HCT116 (cell line): ENCODE measurements at regions of chr3 and their contacts with region 1.

Region 1: GRCh38 chr3:157130467-157131251 is 29.3 kb downstream of the CCNL1 start:
- DNase-seq: peak; percentile 80
- ATAC-seq: peak; percentile 72
- H3K4me3 ChIP-seq: peak overlapping the region; percentile 25 to 36
- H3K27ac ChIP-seq: peak overlapping the region; percentile 99
- H3K4me1 ChIP-seq: peaks cover 54 to 87% of the 10 kb centered on the region in 2 experiments
- H3K27me3 ChIP-seq: no peaks in the 10 kb centered on the region
- CTCF ChIP-seq: peak in 2 of 3 experiments; percentile 65 to 74; a peak in 4 of 6 replicates
- POLR2A ChIP-seq: no peak
- RAD21 ChIP-seq: no peak

Region 2: DNA sequence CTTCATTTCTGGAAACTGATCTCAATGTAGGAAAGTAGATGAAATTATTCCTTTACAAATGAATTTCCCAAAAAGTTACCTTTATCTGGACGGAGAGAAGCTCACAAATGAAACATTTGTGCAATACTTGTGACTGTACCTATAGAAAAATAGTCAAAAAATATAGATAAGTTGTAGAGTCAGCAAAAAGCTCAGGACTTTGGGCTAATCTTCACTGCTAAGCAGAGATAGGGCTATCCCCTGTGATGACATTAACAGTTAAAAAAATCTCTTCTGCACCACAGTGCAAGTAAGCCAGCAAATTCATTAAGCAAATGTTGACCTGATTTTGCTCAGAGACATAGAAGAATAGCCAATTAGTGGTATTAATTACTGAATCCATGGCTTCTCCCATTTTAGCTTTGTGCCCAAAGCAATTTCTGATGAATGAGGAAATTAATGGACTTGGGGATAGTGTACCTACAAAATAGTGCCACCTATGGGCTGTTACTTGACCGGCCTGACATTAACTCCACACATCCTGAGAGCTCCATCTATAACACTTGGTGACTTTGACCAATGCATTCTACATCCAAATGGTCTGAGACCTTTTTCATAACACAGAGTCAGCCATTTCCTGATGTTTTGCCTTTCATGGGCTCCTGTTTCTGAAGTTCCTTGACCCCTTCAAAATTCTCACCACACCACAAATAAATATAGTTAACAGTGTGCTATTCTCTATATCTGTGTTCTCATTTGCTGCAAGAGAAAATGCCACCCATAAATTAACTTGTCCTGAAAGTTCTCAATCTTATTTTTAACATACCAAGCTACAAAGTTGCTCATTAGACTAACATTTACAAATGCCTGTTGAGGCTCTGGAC is 680.7 kb before region 1 on chr3:
- CTCF ChIA-PET with region 1: interaction called, 4 read pairs
- POLR2A ChIA-PET with region 1: no interaction called
- RAD21 ChIA-PET with region 1: no interaction called
- intact Hi-C with region 1: loop called (anchors 10 kb)
- DNase-seq: peak; percentile 37
- ATAC-seq: peak; percentile 91
- H3K4me3 ChIP-seq: no peak overlapping the region
- H3K27ac ChIP-seq: no peak overlapping the region
- H3K4me1 ChIP-seq: no peaks in the 10 kb centered on the region
- H3K27me3 ChIP-seq: no peaks in the 10 kb centered on the region
- CTCF ChIP-seq: peak; percentile 47 to 74 (median 68); a peak in 5 of 6 replicates
- POLR2A ChIP-seq: no peak
- RAD21 ChIP-seq: peak; percentile 61

Region 3: GRCh38 chr3:156816800-156817645 is 313.6 kb before region 1 on chr3:
- CTCF ChIA-PET with region 1: no interaction called
- POLR2A ChIA-PET with region 1: interaction called, 3 read pairs
- RAD21 ChIA-PET with region 1: no interaction called
- intact Hi-C with region 1: loop called (anchors 2 kb)
- DNase-seq: peak; percentile 77
- ATAC-seq: peak; percentile 75
- H3K4me3 ChIP-seq: peak overlapping the region; percentile 51 to 62
- H3K27ac ChIP-seq: peak overlapping the region; percentile 95
- H3K4me1 ChIP-seq: peaks cover 34 to 90% of the 10 kb centered on the region in 2 experiments
- H3K27me3 ChIP-seq: no peaks in the 10 kb centered on the region
- CTCF ChIP-seq: 0 out of 6 replicates have a peak, but pooled peaks of 1 of the 3 experiments have one; percentile 3
- POLR2A ChIP-seq: peak; percentile 51
- RAD21 ChIP-seq: no peak

Region 4: DNA sequence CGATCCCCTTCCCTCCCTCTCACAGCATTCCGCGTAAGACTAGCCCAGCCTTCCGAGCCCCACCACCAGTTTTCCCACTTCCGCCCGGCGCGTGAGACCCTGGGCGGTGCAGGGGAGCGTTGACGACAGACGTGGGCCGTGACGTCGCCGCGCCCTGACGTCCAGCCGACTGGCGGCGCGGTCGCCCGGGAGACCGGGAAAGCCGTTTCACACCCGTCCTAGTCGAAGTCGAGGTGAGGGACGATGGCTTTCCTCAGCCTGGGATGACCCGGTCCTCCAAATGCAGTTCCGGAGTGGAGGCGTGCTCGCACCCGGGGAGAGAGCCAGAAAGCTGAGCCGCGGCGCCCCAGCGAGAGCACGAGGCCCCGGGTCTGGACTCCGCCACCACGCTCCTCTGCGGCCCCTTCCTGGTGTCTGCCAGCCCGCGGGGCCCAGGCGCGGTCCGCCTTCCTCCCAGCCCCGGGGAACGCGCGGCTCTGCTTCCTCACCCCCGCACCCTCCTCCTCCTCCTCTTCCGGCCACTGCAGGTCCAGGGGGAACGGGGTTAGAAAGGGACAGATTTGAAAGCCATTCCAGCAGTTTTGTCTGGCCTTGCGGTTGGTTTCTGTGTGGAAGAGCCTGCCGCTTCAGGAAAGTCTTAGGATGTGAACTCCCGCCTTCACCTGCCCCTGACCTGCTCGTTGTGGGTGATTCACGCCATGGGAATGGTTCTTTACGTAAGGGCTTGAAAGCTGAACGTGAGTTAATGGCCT is 304.3 kb before region 1 on chr3 and contains the start of gene LEKR1:
- CTCF ChIA-PET with region 1: no interaction called
- POLR2A ChIA-PET with region 1: interaction called, 3 read pairs
- RAD21 ChIA-PET with region 1: no interaction called
- intact Hi-C with region 1: loop called (anchors 1 kb)
- DNase-seq: peak; percentile 93
- ATAC-seq: peak; percentile 79
- H3K4me3 ChIP-seq: peak within 1 kb of the TSS; percentile 65 to 66
- H3K27ac ChIP-seq: peak within 1 kb of the TSS; percentile 96
- H3K4me1 ChIP-seq: peaks cover 19 to 58% of the 10 kb centered on the region in 2 experiments; a peak in 3 of 4 replicates
- H3K27me3 ChIP-seq: no peaks in the 10 kb centered on the region
- CTCF ChIP-seq: no peak
- POLR2A ChIP-seq: peak; percentile 59
- RAD21 ChIP-seq: no peak
- total RNA-seq, gene LEKR1: 2.1 TPM

Region 5: DNA sequence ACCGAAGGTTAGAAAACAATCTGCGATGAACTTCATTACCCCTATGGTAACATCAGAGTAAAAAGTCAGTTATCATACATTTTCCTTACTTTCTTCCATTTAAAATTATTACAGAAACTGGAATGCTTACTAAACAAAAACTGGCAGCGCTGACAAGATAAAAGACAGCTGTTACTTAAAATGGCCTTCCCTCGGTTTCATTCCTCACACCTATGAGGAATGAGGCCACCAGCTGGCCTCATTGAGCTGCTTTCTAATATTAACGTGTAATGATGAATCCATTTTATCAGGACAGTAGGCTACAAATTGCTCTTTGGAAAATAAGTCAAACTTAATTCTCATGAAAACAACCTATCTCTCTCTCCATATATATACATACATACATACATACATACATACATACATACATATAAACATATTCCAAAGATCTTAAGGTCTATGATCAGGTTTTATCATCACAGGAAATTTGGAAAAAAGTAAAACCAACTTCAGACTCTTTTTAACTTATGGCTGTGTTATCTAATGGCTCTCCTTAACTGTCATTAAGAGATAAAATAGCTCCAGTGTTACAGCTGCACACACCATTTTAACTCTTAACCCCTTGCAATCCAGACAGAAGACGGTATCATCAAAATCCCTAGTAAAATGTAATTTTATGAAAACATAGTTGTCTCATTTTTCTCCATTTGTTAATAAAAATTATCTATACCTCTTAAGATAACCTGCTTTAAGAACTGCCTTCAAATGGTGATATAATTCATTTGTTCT is 24.1 kb after region 1 on chr3:
- CTCF ChIA-PET with region 1: no interaction called
- POLR2A ChIA-PET with region 1: no interaction called
- RAD21 ChIA-PET with region 1: no interaction called
- intact Hi-C with region 1: no loop called
- DNase-seq: no peak
- ATAC-seq: no peak
- H3K4me3 ChIP-seq: no peak overlapping the region
- H3K27ac ChIP-seq: no peak overlapping the region
- H3K4me1 ChIP-seq: peaks cover 6 to 12% of the 10 kb centered on the region in 2 experiments; a peak in 3 of 4 replicates
- H3K27me3 ChIP-seq: no peaks in the 10 kb centered on the region
- CTCF ChIP-seq: no peak
- POLR2A ChIP-seq: no peak
- RAD21 ChIP-seq: no peak

Region 6: DNA sequence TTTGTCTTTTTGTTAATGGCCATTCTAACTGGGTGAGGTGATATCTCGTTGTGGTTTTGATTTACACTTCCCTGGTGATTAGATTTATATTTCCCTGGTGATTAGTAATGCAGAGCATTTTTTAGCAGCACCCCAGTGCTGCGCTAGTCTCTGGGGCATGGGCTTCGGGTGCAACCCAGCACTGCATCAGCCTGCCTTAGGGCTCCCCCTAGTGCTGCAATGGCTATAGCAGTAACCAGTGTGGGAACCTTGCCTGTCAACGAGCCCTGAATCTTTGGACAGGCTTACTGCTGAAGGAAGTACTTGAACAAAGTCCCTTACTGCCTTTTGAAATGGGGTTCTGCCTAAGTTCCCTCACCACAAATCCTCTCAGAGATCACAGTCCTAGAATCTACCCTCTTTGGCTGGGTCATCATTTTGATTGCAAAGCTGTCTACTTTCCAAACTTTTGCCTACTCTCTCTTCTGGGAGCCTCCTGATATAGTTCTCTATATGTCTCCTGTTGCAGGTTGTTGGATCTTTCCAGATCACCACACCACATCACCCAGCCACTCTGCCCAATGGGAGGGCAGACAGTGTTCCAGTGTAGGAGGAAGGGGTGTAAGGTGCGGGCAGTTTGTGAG is 108.5 kb after region 1 on chr3:
- CTCF ChIA-PET with region 1: no interaction called
- POLR2A ChIA-PET with region 1: no interaction called
- RAD21 ChIA-PET with region 1: no interaction called
- intact Hi-C with region 1: no loop called
- DNase-seq: peak; percentile 46
- ATAC-seq: peak; percentile 100
- H3K4me3 ChIP-seq: no peak overlapping the region
- H3K27ac ChIP-seq: no peak overlapping the region
- H3K4me1 ChIP-seq: no peaks in the 10 kb centered on the region
- H3K27me3 ChIP-seq: no peaks in the 10 kb centered on the region
- CTCF ChIP-seq: peak; percentile 57 to 95 (median 87); a peak in 5 of 6 replicates
- POLR2A ChIP-seq: no peak
- RAD21 ChIP-seq: peak; percentile 82